Activated CD4-positive, alpha-beta T cell treated with anti-CD3 and anti-CD28 coated beads for 36 hours (primary cell): ENCODE measurements at regions of chr4 and their contacts with region 1.

Region 1: GRCh38 chr4:40719008-40719623 is 30.6 kb upstream of the NSUN7 start:
- DNase-seq: peak; percentile 17
- ATAC-seq: peak; percentile 66
- H3K4me3 Mint-ChIP-seq: no peak overlapping the region
- H3K27ac Mint-ChIP-seq: peak overlapping the region; percentile 40
- H3K4me1 Mint-ChIP-seq: peaks cover 15% of the 10 kb centered on the region
- H3K27me3 Mint-ChIP-seq: no peaks in the 10 kb centered on the region

Region 2: GRCh38 chr4:40438384-40439026 is 280.6 kb before region 1 on chr4:
- CTCF ChIA-PET with region 1: no interaction called
- POLR2A ChIA-PET with region 1: no interaction called
- intact Hi-C with region 1: loop called (anchors 5 to 10 kb)
- DNase-seq: no peak
- ATAC-seq: no peak
- H3K4me3 Mint-ChIP-seq: no peak overlapping the region
- H3K27ac Mint-ChIP-seq: no peak overlapping the region
- H3K4me1 Mint-ChIP-seq: peaks cover 13% of the 10 kb centered on the region
- H3K27me3 Mint-ChIP-seq: no peaks in the 10 kb centered on the region

Region 3: DNA sequence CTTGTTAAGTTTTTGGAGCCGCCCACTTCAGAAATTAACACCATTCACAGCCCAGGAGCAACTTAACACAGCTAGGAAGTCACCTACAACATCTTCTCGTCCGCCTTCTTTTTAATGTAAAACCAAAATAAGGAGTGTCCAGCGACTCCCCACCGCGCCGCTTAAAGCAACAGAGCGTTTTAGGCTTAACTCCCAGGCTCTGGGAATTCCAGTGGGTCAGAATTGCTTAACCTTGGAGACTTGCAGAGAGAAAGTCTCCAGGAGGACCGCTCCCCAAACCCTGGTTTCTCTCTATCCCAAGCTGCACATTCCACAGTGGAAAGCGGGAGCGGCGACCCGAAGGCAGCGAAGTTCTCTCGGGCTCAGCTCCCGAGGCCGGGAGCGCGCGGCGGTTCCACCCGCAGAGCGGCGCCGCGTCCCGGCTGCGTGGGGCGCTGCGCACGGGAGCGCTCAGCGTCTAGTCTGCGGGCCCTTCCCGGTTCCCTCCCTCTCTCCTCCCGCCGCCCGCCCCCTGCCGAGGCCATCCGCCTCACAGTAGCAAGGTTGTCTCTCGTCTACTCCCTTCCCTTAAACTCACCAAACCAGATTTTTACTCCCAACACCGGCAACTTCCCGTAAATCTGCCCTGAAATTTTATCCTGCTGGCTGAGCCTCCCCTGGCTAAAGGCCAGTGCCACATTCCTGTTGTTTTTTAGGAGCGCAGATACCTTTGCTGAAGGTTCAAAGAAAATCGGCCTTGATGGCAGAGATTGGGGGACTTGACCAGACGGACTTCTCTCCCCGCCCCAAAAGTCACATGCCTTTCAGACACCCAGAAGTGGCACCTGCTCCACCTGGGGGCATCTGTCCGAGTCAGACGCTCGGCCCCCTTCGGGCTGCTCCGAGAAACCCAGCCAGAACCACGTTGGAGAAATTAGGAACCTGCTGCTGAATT is 89.4 kb before region 1 on chr4 and contains the start of gene RBM47:
- CTCF ChIA-PET with region 1: no interaction called
- POLR2A ChIA-PET with region 1: no interaction called
- intact Hi-C with region 1: loop called (anchors 1 to 2 kb)
- DNase-seq: peak; percentile 63
- ATAC-seq: peak; percentile 72
- H3K4me3 Mint-ChIP-seq: peak within 1 kb of the TSS; percentile 73
- H3K27ac Mint-ChIP-seq: peak within 1 kb of the TSS; percentile 79
- H3K4me1 Mint-ChIP-seq: peaks cover 36% of the 10 kb centered on the region
- H3K27me3 Mint-ChIP-seq: peaks cover 24% of the 10 kb centered on the region
- total RNA-seq, gene RBM47: 3.2 to 4.4 TPM

Region 4: GRCh38 chr4:40687676-40688389 is 31.3 kb before region 1 on chr4:
- CTCF ChIA-PET with region 1: no interaction called
- POLR2A ChIA-PET with region 1: no interaction called
- intact Hi-C with region 1: loop called (anchors 1 to 2 kb)
- DNase-seq: no peak
- ATAC-seq: peak; percentile 18
- H3K4me3 Mint-ChIP-seq: no peak overlapping the region
- H3K27ac Mint-ChIP-seq: peak overlapping the region; percentile 91
- H3K4me1 Mint-ChIP-seq: peaks cover 15% of the 10 kb centered on the region
- H3K27me3 Mint-ChIP-seq: peaks cover 1% of the 10 kb centered on the region

Region 5: GRCh38 chr4:40763228-40763716 is 44.2 kb after region 1 on chr4:
- CTCF ChIA-PET with region 1: no interaction called
- POLR2A ChIA-PET with region 1: no interaction called
- intact Hi-C with region 1: loop called in 1 of 2 experiments (anchors 1 kb)
- DNase-seq: peak; percentile 76
- ATAC-seq: peak; percentile 93
- H3K4me3 Mint-ChIP-seq: no peak overlapping the region
- H3K27ac Mint-ChIP-seq: peak overlapping the region; percentile 47
- H3K4me1 Mint-ChIP-seq: peaks cover 12% of the 10 kb centered on the region
- H3K27me3 Mint-ChIP-seq: peaks cover 1% of the 10 kb centered on the region

Region 6: GRCh38 chr4:42151568-42152506 is 1432.7 kb after region 1 on chr4:
- CTCF ChIA-PET with region 1: no interaction called
- POLR2A ChIA-PET with region 1: no interaction called
- intact Hi-C with region 1: no loop called
- DNase-seq: peak; percentile 50
- ATAC-seq: peak; percentile 61
- H3K4me3 Mint-ChIP-seq: peak overlapping the region; percentile 69
- H3K27ac Mint-ChIP-seq: no peak overlapping the region
- H3K4me1 Mint-ChIP-seq: peaks cover 11% of the 10 kb centered on the region
- H3K27me3 Mint-ChIP-seq: peaks cover 48% of the 10 kb centered on the region